Ascending aorta (tissue), 2 donors: ENCODE measurements at regions of chr22 and their contacts with region 1.

Region 1: GRCh38 chr22:45645526-45646414 is 25.9 kb upstream of the ATXN10 start:
- DNase-seq: peak in 1 of 2 donors; percentile 77
- H3K4me3 ChIP-seq: no peak overlapping the region
- H3K27ac ChIP-seq: no peak overlapping the region
- H3K4me1 ChIP-seq: peaks cover 0 to 3% of the 10 kb centered on the region in 2 donors
- H3K27me3 ChIP-seq: no peaks in the 10 kb centered on the region
- CTCF ChIP-seq: peak; percentile 84 to 95 (median 95)

Region 2: DNA sequence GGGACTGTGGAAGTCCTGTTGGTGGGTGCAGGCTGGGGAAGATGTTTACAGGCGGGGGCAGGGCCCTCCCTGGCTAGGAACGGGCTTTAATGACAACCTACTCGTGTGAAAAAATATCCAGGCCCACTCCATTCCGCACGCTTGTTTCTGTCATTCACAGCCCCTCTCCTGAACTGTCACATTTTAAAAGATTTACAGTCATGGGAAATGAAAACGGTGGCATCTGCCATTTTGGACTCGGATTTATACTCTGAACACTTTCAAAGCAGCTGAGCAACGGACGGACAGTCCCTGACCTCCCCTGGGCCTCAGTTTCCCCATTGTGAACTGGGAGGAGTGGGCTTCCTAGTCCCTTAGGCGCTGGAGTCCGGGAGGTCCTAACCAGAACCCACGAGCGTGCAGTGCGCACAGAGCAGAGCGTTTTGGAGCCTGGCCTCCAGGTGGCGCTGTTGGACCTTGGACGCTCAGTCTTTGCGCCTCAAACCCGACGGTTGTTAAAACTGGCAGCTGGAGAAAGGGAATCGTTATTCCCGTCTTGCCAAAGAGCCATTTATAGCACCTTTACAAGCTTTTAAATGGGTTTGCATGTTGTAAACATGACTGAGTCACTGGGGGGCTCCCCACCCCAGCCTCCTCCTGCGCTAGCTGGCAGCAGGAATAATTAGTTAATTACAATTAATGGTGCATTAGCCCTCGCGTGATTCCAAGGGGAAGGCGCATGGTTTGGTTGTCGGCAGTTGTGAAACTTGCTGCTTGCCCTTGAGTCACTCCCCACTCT is 67.8 kb before region 1 on chr22:
- intact Hi-C with region 1: loop called (anchors 5 kb)
- DNase-seq: peak in 1 of 2 donors; percentile 81
- H3K4me3 ChIP-seq: no peak overlapping the region
- H3K27ac ChIP-seq: no peak overlapping the region
- H3K4me1 ChIP-seq: no peaks in the 10 kb centered on the region
- H3K27me3 ChIP-seq: no peaks in the 10 kb centered on the region
- CTCF ChIP-seq: peak; percentile 86 to 95 (median 93)

Region 3: GRCh38 chr22:45686836-45687235 is 41.1 kb after region 1 on chr22:
- intact Hi-C with region 1: loop called (anchors 1 kb)
- DNase-seq: no peak
- H3K4me3 ChIP-seq: no peak overlapping the region
- H3K27ac ChIP-seq: peak overlapping the region; percentile 16 to 67
- H3K4me1 ChIP-seq: peaks cover 3 to 51% of the 10 kb centered on the region in 2 donors
- H3K27me3 ChIP-seq: no peaks in the 10 kb centered on the region
- CTCF ChIP-seq: no peak

Region 4: GRCh38 chr22:45717789-45718188 is 72.0 kb after region 1 on chr22:
- intact Hi-C with region 1: no loop called
- DNase-seq: no peak
- H3K4me3 ChIP-seq: no peak overlapping the region
- H3K27ac ChIP-seq: no peak overlapping the region
- H3K4me1 ChIP-seq: no peaks in the 10 kb centered on the region
- H3K27me3 ChIP-seq: no peaks in the 10 kb centered on the region
- CTCF ChIP-seq: no peak

Region 5: GRCh38 chr22:45757068-45757467 is 111.3 kb after region 1 on chr22:
- intact Hi-C with region 1: loop called (anchors 5 kb)
- DNase-seq: peak in 1 of 2 donors; percentile 69
- H3K4me3 ChIP-seq: peak overlapping the region; percentile 23 to 27
- H3K27ac ChIP-seq: peak overlapping the region; percentile 50 to 64
- H3K4me1 ChIP-seq: peaks cover 3 to 14% of the 10 kb centered on the region in 2 donors
- H3K27me3 ChIP-seq: no peaks in the 10 kb centered on the region
- CTCF ChIP-seq: peak in 2 of 3 experiments; percentile 34 to 59

Region 6: DNA sequence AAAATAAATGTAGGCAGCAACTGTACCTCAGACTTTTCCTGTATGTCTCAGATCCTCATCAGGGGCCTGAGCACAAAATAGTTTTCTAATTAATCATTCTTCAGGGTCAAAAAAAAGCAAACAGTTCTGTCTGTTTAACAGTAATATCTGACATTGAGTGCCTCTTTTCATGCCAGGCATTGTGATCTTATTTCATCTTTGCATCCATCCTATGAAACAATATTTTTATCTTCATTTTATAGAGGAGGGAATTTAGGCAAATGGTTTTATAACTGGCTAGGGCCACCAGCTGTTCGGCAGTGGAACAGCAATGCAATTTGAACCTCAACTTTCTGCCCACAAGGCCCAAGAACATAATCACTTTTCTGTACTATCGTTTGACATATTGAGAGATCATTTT is 185.6 kb after region 1 on chr22:
- intact Hi-C with region 1: loop called (anchors 1 kb)
- DNase-seq: no peak
- H3K4me3 ChIP-seq: no peak overlapping the region
- H3K27ac ChIP-seq: no peak overlapping the region
- H3K4me1 ChIP-seq: no peaks in the 10 kb centered on the region
- H3K27me3 ChIP-seq: no peaks in the 10 kb centered on the region
- CTCF ChIP-seq: peak in 1 of 3 experiments; percentile 29

Region 7: GRCh38 chr22:45867118-45867905 is 221.5 kb after region 1 on chr22:
- intact Hi-C with region 1: loop called (anchors 1 kb)
- DNase-seq: no peak
- H3K4me3 ChIP-seq: peak overlapping the region; percentile 43 to 53
- H3K27ac ChIP-seq: no peak overlapping the region
- H3K4me1 ChIP-seq: peaks cover 9 to 13% of the 10 kb centered on the region in 2 donors
- H3K27me3 ChIP-seq: peaks cover 15% of the 10 kb centered on the region
- CTCF ChIP-seq: peak in 2 of 3 experiments; percentile 30 to 48